AG04449 (cell line): ENCODE measurements at regions of chr2 and their contacts with region 1.

Region 1: DNA sequence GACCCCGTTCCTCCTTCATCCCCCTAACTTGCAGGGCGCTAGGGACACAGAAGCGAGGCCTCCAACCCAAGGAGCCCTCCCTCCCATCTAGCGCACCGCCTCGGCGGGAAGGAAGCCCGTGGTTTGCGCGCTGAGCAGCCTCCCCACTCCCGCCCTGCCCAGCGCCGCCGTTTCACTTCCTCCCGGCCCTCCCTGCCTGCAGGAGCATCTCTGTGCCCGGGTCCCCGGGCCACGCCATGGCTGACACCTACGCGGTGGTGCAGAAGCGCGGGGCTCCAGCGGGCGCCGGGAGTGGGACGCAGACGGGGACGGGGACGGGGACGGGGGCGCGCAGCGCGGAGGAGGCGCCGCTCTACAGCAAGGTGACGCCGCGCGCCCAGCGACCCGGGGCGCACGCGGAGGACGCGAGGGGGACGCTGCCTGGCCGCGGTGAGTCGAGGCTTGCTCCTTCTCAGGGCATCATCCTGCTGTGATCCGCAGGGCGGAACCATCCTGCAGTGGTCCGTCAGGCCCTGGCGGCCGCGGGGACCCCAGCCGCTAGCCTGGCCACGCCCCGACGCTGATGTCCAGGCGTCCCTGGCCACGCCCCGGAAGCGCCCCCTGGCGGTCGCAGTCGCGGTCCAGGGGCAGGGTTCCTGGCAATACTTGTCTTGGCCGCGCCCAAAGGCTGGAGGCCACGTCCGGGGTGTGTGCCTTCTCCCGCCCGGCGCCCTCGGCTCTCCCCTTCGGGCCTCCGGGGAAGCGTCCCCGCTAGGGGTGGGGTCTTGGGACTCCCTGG is 16.4 kb downstream of the PTPN18 start:
- DNase-seq: no peak
- H3K4me3 ChIP-seq: peak overlapping the region; percentile 90
- CTCF ChIP-seq: peak; percentile 95

Region 2: GRCh38 chr2:130342533-130343275 is 29.5 kb before region 1 on chr2 and contains the start of gene IMP4:
- CTCF ChIA-PET with region 1: interaction called, 53 read pairs
- POLR2A ChIA-PET with region 1: interaction called, 6 read pairs
- DNase-seq: peak; percentile 97
- H3K4me3 ChIP-seq: peak within 1 kb of the TSS; percentile 93
- CTCF ChIP-seq: peak; percentile 46

Region 3: GRCh38 chr2:130355578-130356431 is 16.4 kb before region 1 on chr2 and contains the start of gene PTPN18:
- CTCF ChIA-PET with region 1: interaction called, 32 read pairs
- POLR2A ChIA-PET with region 1: interaction called, 3 read pairs
- DNase-seq: no peak
- H3K4me3 ChIP-seq: peak within 1 kb of the TSS; percentile 67
- CTCF ChIP-seq: peak; percentile 62

Region 4: GRCh38 chr2:130385709-130386108 is 13.5 kb after region 1 on chr2:
- CTCF ChIA-PET with region 1: interaction called, 43 read pairs
- POLR2A ChIA-PET with region 1: interaction called, 6 read pairs
- DNase-seq: no peak
- H3K4me3 ChIP-seq: no peak overlapping the region
- CTCF ChIP-seq: no peak

Region 5: GRCh38 chr2:130391058-130391871 is 19.0 kb after region 1 on chr2:
- CTCF ChIA-PET with region 1: interaction called, 43 read pairs
- POLR2A ChIA-PET with region 1: interaction called, 6 read pairs
- DNase-seq: no peak
- H3K4me3 ChIP-seq: peak overlapping the region; percentile 72
- CTCF ChIP-seq: peak; percentile 0